Calu3 (cell line): ENCODE measurements at regions of chr20 and their contacts with region 1.

Region 1: GRCh38 chr20:31723319-31724078 is 831 bp upstream of the BCL2L1 start:
- DNase-seq: peak; percentile 100
- H3K4me3 Mint-ChIP-seq: peak overlapping the region; percentile 97
- H3K27ac Mint-ChIP-seq: peak overlapping the region; percentile 94
- H3K4me1 Mint-ChIP-seq: peaks cover 21% of the 10 kb centered on the region
- H3K27me3 Mint-ChIP-seq: no peaks in the 10 kb centered on the region
- CTCF ChIP-seq: peak; percentile 97

Region 2: GRCh38 chr20:31630187-31630790 is 93.2 kb before region 1 on chr20:
- CTCF ChIA-PET with region 1: interaction called, 115 read pairs
- intact Hi-C with region 1: loop called (anchors 1 kb)
- DNase-seq: no peak
- H3K4me3 Mint-ChIP-seq: no peak overlapping the region
- H3K27ac Mint-ChIP-seq: no peak overlapping the region
- H3K4me1 Mint-ChIP-seq: no peaks in the 10 kb centered on the region
- H3K27me3 Mint-ChIP-seq: no peaks in the 10 kb centered on the region
- CTCF ChIP-seq: no peak

Region 3: GRCh38 chr20:31661625-31662371 is 61.7 kb before region 1 on chr20:
- CTCF ChIA-PET with region 1: interaction called, 205 read pairs
- intact Hi-C with region 1: loop called (anchors 1 kb)
- DNase-seq: peak; percentile 90
- H3K4me3 Mint-ChIP-seq: peak overlapping the region; percentile 38
- H3K27ac Mint-ChIP-seq: peak overlapping the region; percentile 80
- H3K4me1 Mint-ChIP-seq: peaks cover 62% of the 10 kb centered on the region
- H3K27me3 Mint-ChIP-seq: no peaks in the 10 kb centered on the region
- CTCF ChIP-seq: peak; percentile 97

Region 4: GRCh38 chr20:31684153-31685015 is 39.1 kb before region 1 on chr20:
- CTCF ChIA-PET with region 1: interaction called, 13 read pairs
- intact Hi-C with region 1: loop called (anchors 5 kb)
- DNase-seq: no peak
- H3K4me3 Mint-ChIP-seq: no peak overlapping the region
- H3K27ac Mint-ChIP-seq: peak overlapping the region; percentile 37
- H3K4me1 Mint-ChIP-seq: peaks cover 86% of the 10 kb centered on the region
- H3K27me3 Mint-ChIP-seq: no peaks in the 10 kb centered on the region
- CTCF ChIP-seq: no peak

Region 5: GRCh38 chr20:31698803-31699718 is 24.4 kb before region 1 on chr20:
- CTCF ChIA-PET with region 1: interaction called, 84 read pairs
- intact Hi-C with region 1: loop called (anchors 1 kb)
- DNase-seq: peak; percentile 76
- H3K4me3 Mint-ChIP-seq: peak overlapping the region; percentile 56
- H3K27ac Mint-ChIP-seq: peak overlapping the region; percentile 85
- H3K4me1 Mint-ChIP-seq: peaks cover 79% of the 10 kb centered on the region
- H3K27me3 Mint-ChIP-seq: no peaks in the 10 kb centered on the region
- CTCF ChIP-seq: no peak

Region 6: DNA sequence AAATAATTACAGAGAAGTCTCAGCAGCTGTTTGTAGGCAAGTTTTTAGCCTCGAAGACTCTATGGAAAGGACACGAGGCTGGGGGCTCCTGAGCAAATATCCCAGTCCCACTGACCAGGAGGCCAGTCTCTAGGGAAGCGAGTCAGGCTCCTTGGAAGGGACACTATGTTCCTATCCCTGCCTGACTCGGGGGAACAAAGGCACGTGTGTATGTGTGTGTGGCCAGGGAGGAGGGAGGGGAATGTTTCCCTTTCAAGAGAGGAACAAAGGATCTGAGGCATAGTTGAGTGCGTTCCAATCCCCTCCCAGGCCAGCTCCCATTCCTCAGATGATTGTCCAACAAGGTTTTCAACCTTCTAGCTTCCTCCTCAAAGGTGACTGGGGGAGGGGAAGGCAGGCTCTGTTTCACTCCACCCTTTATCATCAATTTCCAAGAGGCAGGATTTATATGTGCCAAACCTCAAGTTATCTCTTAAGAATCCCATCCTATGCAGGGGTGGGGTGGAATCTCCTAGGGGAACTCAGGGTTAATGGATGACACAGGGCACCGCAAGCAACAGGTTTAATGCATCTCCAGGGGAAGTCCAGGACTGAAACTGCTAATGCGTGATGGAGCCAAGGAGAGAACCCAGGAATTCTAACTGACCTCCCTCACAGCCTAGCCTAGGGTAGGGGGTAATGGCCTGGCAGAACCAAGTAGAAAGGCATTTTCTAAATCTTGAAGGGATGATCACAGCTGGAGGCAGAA is 10.8 kb before region 1 on chr20:
- CTCF ChIA-PET with region 1: interaction called, 32 read pairs
- intact Hi-C with region 1: loop called (anchors 1 kb)
- DNase-seq: peak; percentile 91
- H3K4me3 Mint-ChIP-seq: peak overlapping the region; percentile 97
- H3K27ac Mint-ChIP-seq: peak overlapping the region; percentile 94
- H3K4me1 Mint-ChIP-seq: peaks cover 100% of the 10 kb centered on the region
- H3K27me3 Mint-ChIP-seq: no peaks in the 10 kb centered on the region
- CTCF ChIP-seq: no peak